ENCODE measurements at regions of chr2 and their contacts with region 1.

Region 1: GRCh38 chr2:201118121-201118960 is 2.4 kb downstream of the CFLAR start:
- DNase-seq: peak; percentile 92
- ATAC-seq: peak; percentile 61
- H3K4me3 ChIP-seq: peak overlapping the region; percentile 83
- H3K27ac ChIP-seq: peak overlapping the region; percentile 100
- H3K4me1 ChIP-seq: peaks cover 39% of the 10 kb centered on the region
- H3K27me3 ChIP-seq: no peaks in the 10 kb centered on the region
- CTCF ChIP-seq: peak; percentile 54

Region 2: DNA sequence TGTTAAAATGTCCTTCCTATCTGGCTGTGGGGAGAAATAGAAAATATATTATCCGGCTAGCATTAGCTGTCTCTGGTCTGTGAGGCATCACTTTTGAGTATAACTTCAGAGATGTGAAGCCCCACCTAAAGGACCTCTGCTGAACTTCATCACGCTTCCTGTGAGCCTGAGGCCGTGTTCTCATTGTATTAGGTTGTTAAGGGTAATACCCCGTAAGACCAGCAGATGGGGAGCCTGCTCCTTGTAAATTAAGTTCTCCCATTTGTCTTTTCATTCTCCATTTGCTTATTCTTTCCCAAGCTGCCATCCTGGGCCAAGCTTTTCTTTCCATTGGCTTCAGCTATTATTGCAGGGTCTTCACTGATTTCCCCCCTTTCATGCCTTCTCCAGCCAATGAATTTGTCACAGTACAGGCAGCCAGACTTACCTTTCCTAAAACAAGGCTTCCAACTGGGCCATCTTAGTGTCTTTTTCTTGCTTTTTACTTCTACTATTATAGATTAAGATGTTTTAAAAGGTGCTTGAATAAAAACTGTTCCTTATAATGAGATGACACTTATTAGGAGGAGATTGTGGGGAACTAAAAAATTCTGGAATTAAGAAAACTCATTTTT is 216.8 kb before region 1 on chr2:
- intact Hi-C with region 1: no loop called
- DNase-seq: no peak
- ATAC-seq: peak; percentile 96
- H3K4me3 ChIP-seq: no peak overlapping the region
- H3K27ac ChIP-seq: no peak overlapping the region
- H3K4me1 ChIP-seq: no peaks in the 10 kb centered on the region
- H3K27me3 ChIP-seq: no peaks in the 10 kb centered on the region
- CTCF ChIP-seq: peak; percentile 79

Region 3: DNA sequence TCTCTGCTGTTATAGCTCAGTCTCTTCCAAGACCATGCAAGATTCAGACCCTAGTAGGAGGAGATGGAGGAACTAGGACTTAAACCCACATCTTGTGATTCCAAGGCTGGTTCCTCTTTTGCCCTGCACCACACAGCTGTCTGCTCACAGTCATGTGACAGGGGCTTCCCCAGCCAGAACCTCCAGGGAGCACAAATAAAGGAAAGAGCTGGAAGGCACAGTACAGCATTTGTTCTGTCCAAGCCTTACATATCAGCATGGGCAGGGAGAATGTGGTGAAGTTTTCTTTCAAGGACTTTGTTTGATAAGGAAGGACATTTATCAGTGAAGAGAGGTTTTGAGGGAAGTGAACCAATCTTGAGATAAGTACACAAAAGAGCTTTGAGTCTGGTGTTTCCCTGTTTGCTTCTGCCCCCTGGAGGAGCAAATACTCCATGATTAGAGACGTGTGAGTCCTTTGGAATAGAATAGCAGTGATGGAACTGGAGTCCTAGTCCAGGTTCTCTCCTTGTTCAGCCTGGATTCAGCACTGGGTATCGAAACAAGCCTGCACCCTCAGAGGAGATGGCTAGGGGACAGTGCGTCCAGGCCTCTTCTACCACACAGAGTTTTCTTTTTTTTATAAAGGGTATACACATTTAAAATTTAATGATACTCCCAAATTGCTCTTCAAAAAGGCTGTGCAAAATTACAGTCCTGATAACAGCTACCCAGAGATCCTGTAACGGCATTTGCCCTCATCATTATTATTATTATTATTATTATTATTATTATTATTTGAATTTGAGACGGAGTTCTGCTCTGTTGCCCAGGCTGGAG is 40.0 kb after region 1 on chr2:
- intact Hi-C with region 1: loop called (anchors 5 kb)
- DNase-seq: peak; percentile 80
- ATAC-seq: peak; percentile 94
- H3K4me3 ChIP-seq: no peak overlapping the region
- H3K27ac ChIP-seq: peak overlapping the region; percentile 55
- H3K4me1 ChIP-seq: peaks cover 43% of the 10 kb centered on the region
- H3K27me3 ChIP-seq: no peaks in the 10 kb centered on the region
- CTCF ChIP-seq: peak; percentile 72